ENCODE measurements at regions of chr5 and their contacts with region 1.

Region 1: DNA sequence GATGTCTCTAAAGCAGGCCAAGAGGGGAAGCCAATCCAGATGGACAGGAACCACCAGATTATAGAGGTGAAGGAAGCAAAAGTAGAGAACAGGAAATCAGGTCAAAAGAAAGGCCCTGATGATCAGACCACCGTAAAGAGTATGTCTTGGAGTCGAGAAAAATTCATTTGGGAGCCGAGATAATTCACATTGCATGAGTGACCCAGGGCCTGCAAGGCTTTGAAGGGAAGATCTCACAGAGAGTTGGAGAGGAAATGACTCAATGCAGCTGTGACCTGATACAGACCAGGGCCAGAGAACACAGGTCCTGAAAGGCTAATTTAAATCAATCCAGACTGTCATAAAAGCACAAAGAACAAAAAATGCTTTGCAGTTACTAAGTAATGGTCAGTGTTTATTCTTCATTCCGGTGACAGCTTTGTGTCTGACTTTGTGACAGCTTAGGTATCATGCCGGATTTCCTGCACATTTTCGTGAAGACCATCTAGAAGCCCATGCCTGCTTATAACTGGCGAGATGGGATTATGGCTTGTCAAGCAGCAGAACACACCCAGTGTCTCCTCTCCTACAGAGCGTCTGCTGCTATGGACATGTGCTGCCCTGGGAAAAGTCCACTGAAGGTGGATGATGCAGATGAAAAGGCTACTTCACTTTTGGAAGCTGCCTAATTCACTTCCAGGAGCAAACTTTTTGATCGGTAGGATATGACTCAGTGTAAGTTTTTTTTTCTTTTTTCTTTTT is 5.8 kb upstream of the ACTBL2 start:
- DNase-seq: peak in 1 of 2 donors; percentile 23
- ATAC-seq: peak in 7 of 8 donors; percentile 47 to 86 (median 71)
- H3K4me3 ChIP-seq: no peak overlapping the region
- H3K27ac ChIP-seq: peak overlapping the region in 1 of 10 donors; percentile 18
- H3K4me1 ChIP-seq: peaks cover 0 to 14% (median 6%) of the 10 kb centered on the region in 9 donors
- H3K27me3 ChIP-seq: no peaks in the 10 kb centered on the region
- CTCF ChIP-seq: no peak

Region 2: DNA sequence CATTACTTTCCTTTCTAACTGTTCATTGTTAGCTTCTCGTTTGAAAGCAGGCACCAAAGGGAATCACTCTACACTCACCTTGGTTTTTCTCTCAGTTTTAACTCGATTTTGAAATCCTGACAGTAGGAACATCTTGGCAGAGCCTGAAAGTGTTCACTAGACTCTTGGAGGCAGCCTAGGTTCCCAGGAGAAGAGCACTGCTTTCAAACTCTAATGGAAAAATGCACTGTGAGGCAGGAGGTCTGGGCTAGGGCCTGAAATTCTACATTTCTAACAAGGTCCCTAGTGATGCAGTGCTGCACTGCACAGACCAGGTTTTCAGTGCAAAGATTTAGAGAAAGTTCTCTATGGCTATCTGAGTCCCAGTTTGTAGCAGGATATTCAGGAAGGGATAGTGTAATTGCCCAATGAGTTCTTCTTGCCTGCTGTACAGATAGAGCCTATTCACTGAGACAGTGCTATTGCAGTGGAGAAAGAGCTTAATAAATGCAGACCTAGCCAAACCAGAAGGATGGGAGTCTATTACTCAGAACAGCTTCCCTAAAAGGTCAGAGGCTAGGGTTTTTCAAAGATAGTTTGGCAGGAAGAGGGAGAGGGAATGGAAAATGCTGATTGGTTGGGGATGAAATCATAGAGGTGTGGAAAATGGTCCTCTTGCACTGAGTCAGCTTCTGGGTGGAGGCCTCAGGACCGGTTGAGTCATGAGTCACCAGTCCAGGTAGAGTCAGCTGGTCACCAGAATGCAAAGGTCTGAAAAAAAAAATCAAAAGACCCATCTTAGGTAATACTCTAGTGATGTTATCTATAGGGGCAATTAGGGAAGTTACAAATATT is 160.6 kb before region 1 on chr5:
- intact Hi-C with region 1: loop called in 1 of 10 experiments (anchors 10 kb)
- DNase-seq: no peak
- ATAC-seq: no peak
- H3K4me3 ChIP-seq: no peak overlapping the region
- H3K27ac ChIP-seq: no peak overlapping the region
- H3K4me1 ChIP-seq: peaks cover 0 to 26% (median 10%) of the 10 kb centered on the region in 9 donors
- H3K27me3 ChIP-seq: peaks cover 0 to 3% (median 0%) of the 10 kb centered on the region in 7 donors
- CTCF ChIP-seq: no peak

Region 3: DNA sequence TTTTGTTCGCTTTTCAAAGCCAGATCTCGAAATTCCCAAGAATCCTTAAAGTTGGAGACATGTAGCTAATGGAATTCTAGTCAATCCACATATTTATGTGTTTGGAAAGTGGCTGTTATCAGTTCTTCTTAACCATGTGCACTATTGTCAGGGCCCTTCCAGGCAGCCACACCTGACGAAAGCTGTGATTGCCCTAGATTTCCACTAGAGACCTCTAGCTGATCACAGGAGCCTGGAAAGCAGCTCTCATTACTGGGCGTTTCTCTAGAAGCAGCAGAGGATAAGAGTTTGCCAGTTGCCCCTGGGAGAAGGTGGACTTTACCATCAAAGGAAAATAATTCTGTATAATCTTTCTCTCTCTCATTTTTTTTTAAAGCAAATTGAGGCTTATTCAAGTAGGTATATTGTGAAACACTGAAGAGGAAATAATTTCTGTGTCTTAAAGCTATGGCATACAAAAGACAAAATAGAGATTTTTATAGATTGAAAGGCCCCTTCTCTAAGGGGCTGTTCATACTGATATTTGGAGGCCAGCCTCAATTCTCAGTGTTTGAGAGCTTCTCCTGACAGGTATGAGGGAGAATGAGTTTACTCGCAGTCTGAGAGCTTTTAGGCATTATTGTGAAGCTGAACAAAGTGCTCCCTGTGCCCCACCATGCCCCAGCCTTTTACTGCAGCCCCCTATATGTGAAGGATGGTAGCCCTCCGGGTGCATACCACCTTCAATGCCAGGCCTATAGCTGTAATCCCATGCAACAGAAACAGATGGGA is 399.7 kb after region 1 on chr5:
- intact Hi-C with region 1: loop called in 4 of 10 experiments (anchors 10 kb)
- DNase-seq: peak in 1 of 2 donors; percentile 69
- ATAC-seq: peak; percentile 89 to 93 (median 90)
- H3K4me3 ChIP-seq: no peak overlapping the region
- H3K27ac ChIP-seq: peak overlapping the region in 1 of 10 donors; percentile 8
- H3K4me1 ChIP-seq: peaks cover 0 to 32% (median 11%) of the 10 kb centered on the region in 9 donors
- H3K27me3 ChIP-seq: no peaks in the 10 kb centered on the region
- CTCF ChIP-seq: peak; percentile 42 to 82 (median 66)

Measured in heart right ventricle (tissue), 16 donors.